ENCODE measurements at regions of chr2 and their contacts with region 1.

Region 1: GRCh38 chr2:170815746-170816503 is 762 bp upstream of the GAD1 start:
- DNase-seq: no peak
- H3K4me3 ChIP-seq: peak overlapping the region; percentile 54 to 69
- H3K27ac ChIP-seq: peak overlapping the region in 1 of 2 donors; percentile 90
- H3K4me1 ChIP-seq: peaks cover 17 to 24% of the 10 kb centered on the region in 2 donors
- H3K27me3 ChIP-seq: peaks cover 5% of the 10 kb centered on the region
- CTCF ChIP-seq: peak; percentile 71 to 83 (median 77)

Region 2: GRCh38 chr2:169653636-169654035 is 1162.3 kb before region 1 on chr2:
- intact Hi-C with region 1: no loop called
- DNase-seq: no peak
- H3K4me3 ChIP-seq: no peak overlapping the region
- H3K27ac ChIP-seq: no peak overlapping the region
- H3K4me1 ChIP-seq: no peaks in the 10 kb centered on the region
- H3K27me3 ChIP-seq: no peaks in the 10 kb centered on the region
- CTCF ChIP-seq: no peak

Region 3: GRCh38 chr2:170369894-170370293 is 446.0 kb before region 1 on chr2:
- intact Hi-C with region 1: loop called (anchors 2 kb)
- DNase-seq: no peak
- H3K4me3 ChIP-seq: no peak overlapping the region
- H3K27ac ChIP-seq: no peak overlapping the region
- H3K4me1 ChIP-seq: no peaks in the 10 kb centered on the region
- H3K27me3 ChIP-seq: no peaks in the 10 kb centered on the region
- CTCF ChIP-seq: peak in 2 of 3 experiments; percentile 18 to 48

Region 4: GRCh38 chr2:170409164-170409535 is 406.8 kb before region 1 on chr2:
- intact Hi-C with region 1: loop called (anchors 2 kb)
- DNase-seq: peak in 1 of 2 donors; percentile 82
- H3K4me3 ChIP-seq: peak overlapping the region in 1 of 2 donors; percentile 42
- H3K27ac ChIP-seq: no peak overlapping the region
- H3K4me1 ChIP-seq: no peaks in the 10 kb centered on the region
- H3K27me3 ChIP-seq: no peaks in the 10 kb centered on the region
- CTCF ChIP-seq: peak; percentile 68 to 76 (median 75)

Region 5: GRCh38 chr2:170486730-170487129 is 329.2 kb before region 1 on chr2:
- intact Hi-C with region 1: loop called (anchors 1 kb)
- DNase-seq: no peak
- H3K4me3 ChIP-seq: no peak overlapping the region
- H3K27ac ChIP-seq: no peak overlapping the region
- H3K4me1 ChIP-seq: no peaks in the 10 kb centered on the region
- H3K27me3 ChIP-seq: no peaks in the 10 kb centered on the region
- CTCF ChIP-seq: peak in 2 of 3 experiments; percentile 20 to 49

Region 6: DNA sequence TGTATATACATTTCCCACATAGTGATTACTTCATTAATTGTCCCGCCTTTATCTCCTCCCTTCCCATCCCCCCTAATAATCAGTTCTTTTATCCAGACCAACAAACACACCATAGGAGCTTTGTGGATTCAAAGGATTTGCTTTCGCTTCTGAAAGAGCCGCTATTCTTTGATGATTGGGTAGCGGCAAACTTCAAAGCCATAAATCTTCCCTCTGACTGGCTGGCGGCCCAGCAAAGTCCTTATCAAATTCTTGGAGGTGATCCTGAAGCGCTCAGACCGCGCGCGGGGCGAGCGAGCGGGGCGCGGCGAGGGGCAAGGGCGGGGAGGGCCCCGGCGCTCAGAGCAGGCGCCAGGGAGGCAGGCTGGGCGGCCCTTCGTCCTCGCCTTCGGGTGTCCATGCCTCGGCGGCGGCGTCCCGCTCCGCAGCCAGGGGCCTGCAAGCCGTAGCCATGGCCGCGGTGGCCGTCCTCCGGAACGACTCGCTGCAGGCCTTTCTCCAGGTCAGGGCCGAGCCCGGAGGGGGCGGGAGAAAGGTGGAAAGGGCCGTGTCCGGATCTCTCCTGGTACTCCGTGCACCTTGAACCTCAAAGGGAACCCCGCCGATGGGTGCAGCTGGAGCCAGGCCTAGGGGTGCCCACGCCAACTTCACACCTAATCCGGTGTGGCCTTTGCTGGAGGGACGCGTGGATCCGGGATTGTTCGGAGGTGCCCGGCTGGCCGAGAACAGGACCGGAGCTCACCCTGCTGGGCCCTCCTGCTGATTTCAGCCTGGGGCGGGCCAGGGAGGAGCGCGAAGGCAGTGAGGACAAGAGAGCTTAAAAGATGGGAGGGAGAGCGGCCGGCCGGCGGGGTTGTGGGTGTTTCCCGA is 100.6 kb before region 1 on chr2 and contains the start of gene SP5:
- intact Hi-C with region 1: loop called (anchors 5 kb)
- DNase-seq: peak in 1 of 2 donors; percentile 66
- H3K4me3 ChIP-seq: peak within 1 kb of the TSS; percentile 48 to 68
- H3K27ac ChIP-seq: peak within 1 kb of the TSS in 1 of 2 donors; percentile 29
- H3K4me1 ChIP-seq: peaks cover 8 to 12% of the 10 kb centered on the region in 2 donors
- H3K27me3 ChIP-seq: peaks cover 14% of the 10 kb centered on the region
- CTCF ChIP-seq: no peak
- total RNA-seq, gene SP5: 2.8 TPM

Region 7: GRCh38 chr2:170770606-170771420 is 45.1 kb before region 1 on chr2:
- intact Hi-C with region 1: loop called (anchors 2 kb)
- DNase-seq: peak in 1 of 2 donors; percentile 83
- H3K4me3 ChIP-seq: peak overlapping the region; percentile 71 to 75
- H3K27ac ChIP-seq: peak overlapping the region; percentile 68 to 80
- H3K4me1 ChIP-seq: no peaks in the 10 kb centered on the region
- H3K27me3 ChIP-seq: no peaks in the 10 kb centered on the region
- CTCF ChIP-seq: no peak